Left ventricle myocardium inferior (tissue), 1 donor: ENCODE measurements at regions of chr6 and their contacts with region 1.

Region 1: GRCh38 chr6:154868143-154868594 is 126.9 kb upstream of the TIAM2 start:
- DNase-seq: no peak
- H3K4me3 ChIP-seq: no peak overlapping the region
- H3K27ac ChIP-seq: no peak overlapping the region
- H3K4me1 ChIP-seq: peaks cover 27% of the 10 kb centered on the region
- H3K27me3 ChIP-seq: no peaks in the 10 kb centered on the region
- CTCF ChIP-seq: peak; percentile 80

Region 2: GRCh38 chr6:155181498-155181897 is 313.3 kb after region 1 on chr6:
- intact Hi-C with region 1: loop called (anchors 5 kb)
- DNase-seq: no peak
- H3K4me3 ChIP-seq: no peak overlapping the region
- H3K27ac ChIP-seq: no peak overlapping the region
- H3K4me1 ChIP-seq: peaks cover 5% of the 10 kb centered on the region
- H3K27me3 ChIP-seq: no peaks in the 10 kb centered on the region
- CTCF ChIP-seq: no peak